ENCODE measurements at regions of chr9 and their contacts with region 1.

Region 1: GRCh38 chr9:70563431-70564204 is 149.2 kb upstream of the KLF9 start:
- DNase-seq: peak; percentile 70
- H3K4me3 Mint-ChIP-seq: peak overlapping the region; percentile 69
- H3K27ac Mint-ChIP-seq: peak overlapping the region; percentile 89
- H3K4me1 Mint-ChIP-seq: peaks cover 72% of the 10 kb centered on the region
- H3K27me3 Mint-ChIP-seq: peaks cover 2% of the 10 kb centered on the region

Region 2: DNA sequence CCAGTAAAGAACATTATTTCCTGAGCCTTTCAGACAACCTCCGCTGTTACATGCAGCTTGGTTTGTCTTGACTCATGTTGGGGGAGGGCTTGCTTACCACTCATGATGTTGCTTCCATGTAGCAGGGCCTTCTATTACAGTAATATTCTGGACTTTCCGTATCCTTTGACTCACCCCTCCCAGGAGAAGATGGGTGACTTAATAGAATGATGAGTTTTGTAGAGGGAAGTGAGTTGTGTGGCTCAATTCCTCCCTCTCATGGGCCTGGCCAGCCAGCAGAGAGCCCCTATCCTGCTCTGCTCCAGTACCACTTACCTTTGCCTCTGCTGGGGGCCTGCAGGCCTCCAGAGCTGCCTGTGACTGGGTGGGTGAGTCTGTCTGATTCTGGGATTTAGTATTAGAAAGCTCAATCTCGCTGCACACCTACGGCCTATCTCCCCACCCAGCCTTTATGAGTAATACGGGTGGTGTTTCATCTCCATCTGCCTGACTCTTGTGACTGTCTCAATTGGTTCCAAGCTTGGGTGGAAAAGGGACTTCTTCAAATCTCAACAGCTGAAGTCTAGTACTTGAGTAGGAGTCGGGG is 96.5 kb before region 1 on chr9:
- intact Hi-C with region 1: loop called (anchors 1 kb)
- DNase-seq: no peak
- H3K4me3 Mint-ChIP-seq: no peak overlapping the region
- H3K27ac Mint-ChIP-seq: peak overlapping the region; percentile 47
- H3K4me1 Mint-ChIP-seq: peaks cover 48% of the 10 kb centered on the region
- H3K27me3 Mint-ChIP-seq: no peaks in the 10 kb centered on the region

Region 3: GRCh38 chr9:70519912-70520724 is 43.5 kb before region 1 on chr9:
- intact Hi-C with region 1: loop called (anchors 1 kb)
- DNase-seq: peak; percentile 6
- H3K4me3 Mint-ChIP-seq: peak overlapping the region; percentile 53
- H3K27ac Mint-ChIP-seq: peak overlapping the region; percentile 68
- H3K4me1 Mint-ChIP-seq: peaks cover 17% of the 10 kb centered on the region
- H3K27me3 Mint-ChIP-seq: no peaks in the 10 kb centered on the region

Region 4: DNA sequence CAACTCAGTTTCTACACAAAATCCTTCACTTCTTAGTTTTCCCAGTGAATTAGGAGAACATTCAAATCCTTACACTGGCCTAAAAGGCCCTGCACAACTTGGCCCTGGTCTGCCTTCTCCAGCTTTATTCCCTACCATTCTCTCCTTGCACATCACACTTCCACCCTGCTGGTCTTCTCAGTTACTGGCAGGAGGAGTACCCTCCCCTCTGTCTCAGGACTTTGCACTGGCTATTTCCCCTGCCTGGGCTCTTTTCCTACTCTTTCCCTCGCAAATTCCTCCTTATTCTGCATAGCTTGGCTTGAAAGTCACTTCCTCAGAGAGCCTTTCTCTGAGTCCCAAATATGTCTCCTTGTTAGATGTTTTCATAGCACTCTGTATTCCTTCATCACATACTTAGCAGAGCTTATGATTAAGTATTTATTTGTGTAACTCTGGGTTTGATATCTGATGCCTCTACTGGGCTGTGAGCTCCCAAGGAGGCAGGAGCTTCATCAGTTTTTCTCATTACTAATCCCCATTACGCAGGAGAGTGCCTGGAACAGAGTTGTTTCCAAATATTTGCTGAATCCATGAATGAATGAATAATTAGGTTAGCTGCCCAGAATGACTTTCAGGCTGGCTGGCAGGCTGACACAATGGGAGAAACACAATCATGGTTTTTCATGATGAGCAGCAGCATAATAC is 10.7 kb after region 1 on chr9:
- intact Hi-C with region 1: no loop called
- DNase-seq: no peak
- H3K4me3 Mint-ChIP-seq: no peak overlapping the region
- H3K27ac Mint-ChIP-seq: no peak overlapping the region
- H3K4me1 Mint-ChIP-seq: no peaks in the 10 kb centered on the region
- H3K27me3 Mint-ChIP-seq: no peaks in the 10 kb centered on the region